A673 (cell line): ENCODE measurements at regions of chr18 and their contacts with region 1.

Region 1: DNA sequence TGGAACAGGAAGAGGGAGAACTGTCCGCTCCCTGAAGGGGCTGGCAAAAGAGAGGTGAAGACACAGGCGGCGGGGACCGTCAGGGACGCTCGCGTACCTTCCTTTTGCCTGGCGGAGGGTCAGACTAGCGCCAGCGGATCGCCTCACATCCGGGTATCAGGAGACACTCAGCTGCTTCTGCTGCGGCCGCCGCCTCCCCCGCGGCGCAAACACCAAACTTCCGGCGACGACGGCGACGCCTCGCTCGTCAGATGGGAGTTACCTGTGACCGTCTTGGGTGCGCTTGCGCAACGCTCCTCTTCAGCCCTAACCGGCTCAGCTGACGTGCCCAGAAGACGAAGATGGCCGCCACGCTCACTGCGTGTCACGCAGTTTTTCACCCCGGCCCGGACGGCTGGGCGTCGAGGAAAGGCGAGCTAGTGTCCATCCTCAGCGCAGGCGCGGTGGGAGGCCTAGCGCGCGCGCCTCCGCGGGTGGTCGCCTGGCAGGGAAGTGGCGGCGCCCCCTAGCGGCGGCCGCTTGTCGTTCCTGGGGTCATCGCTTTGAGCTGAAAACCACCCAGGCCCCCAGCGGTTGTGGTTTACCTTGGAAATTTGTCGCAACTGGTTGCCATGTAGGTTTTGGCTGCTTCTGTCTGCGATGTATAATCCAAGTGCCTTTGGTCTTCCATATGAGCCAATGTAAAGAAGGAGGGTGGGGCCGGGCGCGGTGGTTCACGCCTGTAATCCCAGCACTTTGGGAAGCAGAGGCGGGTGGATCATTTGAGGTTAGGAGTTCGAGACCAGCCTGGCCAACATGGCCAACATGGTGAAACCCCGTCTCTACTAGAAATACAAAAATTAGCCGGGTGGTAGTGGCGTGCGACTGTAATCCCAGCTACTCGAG is at the start of gene ESCO1:
- DNase-seq: peak; percentile 96
- H3K4me3 ChIP-seq: peak within 1 kb of the TSS; percentile 97
- H3K27ac ChIP-seq: peak within 1 kb of the TSS; percentile 93
- H3K4me1 ChIP-seq: peaks cover 21% of the 10 kb centered on the region
- H3K27me3 ChIP-seq: no peaks in the 10 kb centered on the region
- CTCF ChIP-seq: peak; percentile 96
- total RNA-seq, gene ESCO1: 14.9 and 16.5 TPM in 2 replicates

Region 2: DNA sequence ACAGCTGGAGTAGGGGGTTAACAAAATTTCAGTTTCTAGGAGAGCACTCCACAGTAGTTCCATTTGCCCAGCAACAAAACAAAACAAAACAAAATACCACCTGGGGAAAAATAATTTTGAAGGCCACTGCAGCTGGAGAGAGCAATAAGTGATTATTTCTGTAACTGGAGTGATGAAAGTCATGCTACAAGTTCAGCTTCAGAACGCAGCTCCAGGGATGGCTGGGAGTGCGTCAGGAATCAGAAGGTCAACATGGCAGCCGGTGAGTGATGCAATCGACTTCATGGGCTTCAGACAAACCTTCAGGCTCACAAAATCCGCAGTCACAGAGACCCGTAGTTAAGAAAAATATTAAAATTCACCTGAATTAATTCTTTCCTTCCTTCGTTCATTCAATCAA is 62.8 kb after region 1 on chr18:
- CTCF ChIA-PET with region 1: no interaction called
- POLR2A ChIA-PET with region 1: no interaction called
- intact Hi-C with region 1: no loop called
- DNase-seq: no peak
- H3K4me3 ChIP-seq: no peak overlapping the region
- H3K27ac ChIP-seq: no peak overlapping the region
- H3K4me1 ChIP-seq: no peaks in the 10 kb centered on the region
- H3K27me3 ChIP-seq: no peaks in the 10 kb centered on the region
- CTCF ChIP-seq: no peak

Region 3: GRCh38 chr18:21714474-21714873 is 113.7 kb after region 1 on chr18:
- CTCF ChIA-PET with region 1: no interaction called
- POLR2A ChIA-PET with region 1: no interaction called
- intact Hi-C with region 1: no loop called
- DNase-seq: no peak
- H3K4me3 ChIP-seq: no peak overlapping the region
- H3K27ac ChIP-seq: no peak overlapping the region
- H3K4me1 ChIP-seq: no peaks in the 10 kb centered on the region
- H3K27me3 ChIP-seq: no peaks in the 10 kb centered on the region
- CTCF ChIP-seq: no peak

Region 4: DNA sequence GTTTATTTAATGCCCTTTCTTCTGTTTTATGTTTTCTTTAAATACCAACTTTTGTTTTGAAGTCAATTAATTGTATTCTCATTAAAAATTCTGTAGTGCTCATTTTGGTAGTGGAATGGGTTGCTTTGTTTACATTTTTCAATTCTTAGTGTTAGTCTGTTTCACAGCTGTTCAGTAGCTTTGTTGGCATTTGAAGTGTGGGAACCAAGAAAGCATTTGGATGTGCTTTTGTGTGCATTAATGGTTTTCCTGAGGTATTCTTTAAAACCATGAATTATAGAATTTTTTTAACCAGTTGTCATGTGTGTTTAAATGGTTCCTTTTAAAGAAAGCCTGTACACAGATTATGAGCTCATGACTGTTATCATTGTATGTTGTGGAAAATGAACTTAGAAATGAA is 159.6 kb after region 1 on chr18:
- CTCF ChIA-PET with region 1: no interaction called
- POLR2A ChIA-PET with region 1: no interaction called
- intact Hi-C with region 1: loop called (anchors 10 kb)
- DNase-seq: no peak
- H3K4me3 ChIP-seq: no peak overlapping the region
- H3K27ac ChIP-seq: no peak overlapping the region
- H3K4me1 ChIP-seq: peaks cover 40% of the 10 kb centered on the region
- H3K27me3 ChIP-seq: no peaks in the 10 kb centered on the region
- CTCF ChIP-seq: no peak